Naive thymus-derived CD8-positive, alpha-beta T cell (primary cell): ENCODE measurements at regions of chr17 and their contacts with region 1.

Region 1: GRCh38 chr17:35519439-35519838 is 18.0 kb downstream of the SLFN12L start:
- DNase-seq: no peak
- ATAC-seq: no peak
- H3K4me3 Mint-ChIP-seq: peak overlapping the region in 9 of 10 donors; percentile 30 to 70 (median 66)
- H3K27ac Mint-ChIP-seq: peak overlapping the region in 9 of 10 donors; percentile 21 to 95 (median 78)
- H3K4me1 Mint-ChIP-seq: peaks cover 54 to 97% (median 90%) of the 10 kb centered on the region in 4 donors
- H3K27me3 Mint-ChIP-seq: peaks cover 0 to 2% (median 0%) of the 10 kb centered on the region in 5 donors

Region 2: GRCh38 chr17:35531160-35531559 is 11.7 kb after region 1 on chr17:
- POLR2A ChIA-PET with region 1: interaction called, 15 read pairs
- DNase-seq: no peak
- ATAC-seq: no peak
- H3K4me3 Mint-ChIP-seq: peak overlapping the region in 8 of 10 donors; percentile 1 to 83 (median 46)
- H3K27ac Mint-ChIP-seq: peak overlapping the region in 8 of 10 donors; percentile 40 to 98 (median 92)
- H3K4me1 Mint-ChIP-seq: peaks cover 37 to 79% (median 69%) of the 10 kb centered on the region in 4 donors
- H3K27me3 Mint-ChIP-seq: no peaks in the 10 kb centered on the region

Region 3: GRCh38 chr17:35588196-35588920 is 68.9 kb after region 1 on chr17:
- POLR2A ChIA-PET with region 1: no interaction called
- DNase-seq: no peak
- ATAC-seq: no peak
- H3K4me3 Mint-ChIP-seq: peak overlapping the region; percentile 96 to 100 (median 98)
- H3K27ac Mint-ChIP-seq: peak overlapping the region; percentile 0 to 100 (median 99)
- H3K4me1 Mint-ChIP-seq: peaks cover 18 to 55% (median 39%) of the 10 kb centered on the region in 4 donors
- H3K27me3 Mint-ChIP-seq: peaks cover 0 to 2% (median 0%) of the 10 kb centered on the region in 5 donors